ENCODE measurements at regions of chr10 and their contacts with region 1.

Region 1: GRCh38 chr10:28991326-28992270 is 297.3 kb upstream of the LYZL1 start:
- DNase-seq: peak; percentile 78
- ATAC-seq: peak; percentile 93
- H3K4me3 ChIP-seq: no peak overlapping the region
- H3K27ac ChIP-seq: no peak overlapping the region; the same call in 1 of the 2 replicates
- H3K4me1 ChIP-seq: peaks cover 4% of the 10 kb centered on the region
- H3K27me3 ChIP-seq: no peaks in the 10 kb centered on the region
- CTCF ChIP-seq: peak; percentile 70
- POLR2A ChIP-seq: no peak
- RAD21 ChIP-seq: peak; percentile 85

Region 2: GRCh38 chr10:28217848-28218247 is 773.8 kb before region 1 on chr10:
- CTCF ChIA-PET with region 1: no interaction called
- POLR2A ChIA-PET with region 1: no interaction called
- dilution Hi-C with region 1: no loop called
- in situ Hi-C with region 1: no loop called
- intact Hi-C with region 1: no loop called
- DNase-seq: peak; percentile 92
- ATAC-seq: peak; percentile 91
- H3K4me3 ChIP-seq: peak overlapping the region; percentile 3; the same call in 1 of the 2 replicates
- H3K27ac ChIP-seq: peak overlapping the region; percentile 48
- H3K4me1 ChIP-seq: peaks cover 3% of the 10 kb centered on the region
- H3K27me3 ChIP-seq: no peaks in the 10 kb centered on the region
- CTCF ChIP-seq: no peak
- POLR2A ChIP-seq: no peak
- RAD21 ChIP-seq: no peak

Region 3: GRCh38 chr10:28663576-28664313 is 327.9 kb before region 1 on chr10:
- CTCF ChIA-PET with region 1: interaction called, 13 read pairs
- POLR2A ChIA-PET with region 1: no interaction called
- dilution Hi-C with region 1: no loop called
- in situ Hi-C with region 1: no loop called
- intact Hi-C with region 1: loop called (anchors 1 kb)
- DNase-seq: peak; percentile 87
- ATAC-seq: peak; percentile 84
- H3K4me3 ChIP-seq: no peak overlapping the region
- H3K27ac ChIP-seq: no peak overlapping the region
- H3K4me1 ChIP-seq: peaks cover 6% of the 10 kb centered on the region
- H3K27me3 ChIP-seq: peaks cover 25% of the 10 kb centered on the region
- CTCF ChIP-seq: peak; percentile 99
- POLR2A ChIP-seq: peak; percentile 54; the same call in 1 of the 2 replicates
- RAD21 ChIP-seq: peak; percentile 100

Region 4: GRCh38 chr10:28734941-28735759 is 256.4 kb before region 1 on chr10:
- CTCF ChIA-PET with region 1: no interaction called
- POLR2A ChIA-PET with region 1: no interaction called
- dilution Hi-C with region 1: no loop called
- in situ Hi-C with region 1: no loop called
- intact Hi-C with region 1: loop called (anchors 2 kb)
- DNase-seq: peak; percentile 96
- ATAC-seq: peak; percentile 96
- H3K4me3 ChIP-seq: no peak overlapping the region
- H3K27ac ChIP-seq: peak overlapping the region; percentile 40
- H3K4me1 ChIP-seq: peaks cover 5% of the 10 kb centered on the region
- H3K27me3 ChIP-seq: peaks cover 16% of the 10 kb centered on the region
- CTCF ChIP-seq: no peak
- POLR2A ChIP-seq: no peak
- RAD21 ChIP-seq: no peak

Region 5: DNA sequence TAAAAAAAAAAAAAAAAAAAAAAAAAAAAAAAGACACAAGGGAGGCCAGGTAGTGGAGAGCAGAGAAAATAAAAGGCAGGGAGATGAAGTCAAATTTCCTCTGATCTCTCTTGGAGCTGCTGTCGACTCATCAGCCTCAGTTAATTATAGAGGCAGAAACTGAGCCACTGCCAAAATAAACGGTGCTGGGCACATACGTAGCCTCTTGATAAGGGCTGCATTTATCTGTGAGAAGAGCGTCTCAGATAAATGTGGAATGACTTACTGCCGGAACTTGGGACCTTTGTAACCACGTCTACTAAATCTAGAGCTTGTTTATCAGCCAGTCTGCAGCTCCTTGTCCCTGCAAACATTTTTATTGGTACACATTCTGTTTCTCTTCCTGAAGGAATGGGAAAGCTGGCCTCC is 152.0 kb before region 1 on chr10:
- CTCF ChIA-PET with region 1: interaction called, 3 read pairs
- POLR2A ChIA-PET with region 1: no interaction called
- dilution Hi-C with region 1: no loop called
- in situ Hi-C with region 1: no loop called
- intact Hi-C with region 1: loop called (anchors 5 kb)
- DNase-seq: peak; percentile 79
- ATAC-seq: peak; percentile 8; the same call in 1 of the 2 replicates
- H3K4me3 ChIP-seq: no peak overlapping the region
- H3K27ac ChIP-seq: no peak overlapping the region
- H3K4me1 ChIP-seq: peaks cover 12% of the 10 kb centered on the region
- H3K27me3 ChIP-seq: no peaks in the 10 kb centered on the region
- CTCF ChIP-seq: no peak
- POLR2A ChIP-seq: no peak
- RAD21 ChIP-seq: no peak

Region 6: DNA sequence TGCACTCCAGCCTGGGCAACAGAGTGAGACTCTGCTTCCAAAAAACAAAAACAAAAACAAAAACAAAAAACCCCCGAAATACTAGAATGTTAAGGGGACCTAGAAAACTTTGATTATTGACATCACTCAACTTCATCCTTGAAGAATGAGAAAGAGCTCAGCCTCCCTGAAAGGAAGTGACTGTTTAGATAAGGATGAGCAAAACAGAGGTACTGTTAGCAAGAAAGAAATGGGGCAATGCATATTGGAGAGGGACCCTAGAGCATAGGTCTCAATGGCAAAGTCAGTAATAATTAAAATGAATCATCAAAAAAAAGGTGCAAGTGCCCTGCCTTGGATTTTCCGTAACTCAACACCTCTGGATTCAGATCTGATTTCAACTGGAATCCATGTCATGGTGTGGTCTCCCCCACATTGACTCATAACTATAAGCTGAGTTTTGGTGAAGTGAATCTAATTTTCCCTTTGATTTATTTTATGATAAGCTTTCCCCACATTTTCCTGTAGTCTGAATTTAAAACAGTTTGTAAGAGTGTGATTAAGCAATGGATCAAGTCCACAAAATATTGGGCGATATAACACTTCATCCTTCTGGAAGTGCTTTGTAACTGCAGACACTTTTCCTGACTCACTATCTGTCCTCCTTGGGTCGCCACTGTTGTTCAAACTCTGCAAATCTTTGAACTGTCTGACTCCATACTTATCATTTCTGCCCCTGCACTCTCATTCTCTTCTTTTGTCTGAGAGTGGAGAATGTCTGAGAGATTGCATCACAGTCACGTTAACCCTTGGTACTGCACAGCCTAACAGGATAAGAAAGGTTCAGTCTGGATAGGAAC is 72.4 kb after region 1 on chr10:
- CTCF ChIA-PET with region 1: no interaction called
- POLR2A ChIA-PET with region 1: no interaction called
- dilution Hi-C with region 1: no loop called
- in situ Hi-C with region 1: no loop called
- intact Hi-C with region 1: loop called (anchors 2 kb)
- DNase-seq: peak; percentile 52
- ATAC-seq: peak; percentile 88
- H3K4me3 ChIP-seq: no peak overlapping the region
- H3K27ac ChIP-seq: no peak overlapping the region
- H3K4me1 ChIP-seq: peaks cover 4% of the 10 kb centered on the region; the same call in 1 of the 2 replicates
- H3K27me3 ChIP-seq: peaks cover 7% of the 10 kb centered on the region
- CTCF ChIP-seq: peak; percentile 24; the same call in 1 of the 2 replicates
- POLR2A ChIP-seq: no peak
- RAD21 ChIP-seq: peak; percentile 43

Region 7: GRCh38 chr10:29131952-29132820 is 140.6 kb after region 1 on chr10:
- CTCF ChIA-PET with region 1: interaction called, 7 read pairs
- POLR2A ChIA-PET with region 1: no interaction called
- dilution Hi-C with region 1: no loop called
- in situ Hi-C with region 1: no loop called
- intact Hi-C with region 1: loop called (anchors 5 kb)
- DNase-seq: peak; percentile 19
- ATAC-seq: peak; percentile 49; the same call in 1 of the 2 replicates
- H3K4me3 ChIP-seq: no peak overlapping the region
- H3K27ac ChIP-seq: no peak overlapping the region
- H3K4me1 ChIP-seq: peaks cover 15% of the 10 kb centered on the region
- H3K27me3 ChIP-seq: peaks cover 3% of the 10 kb centered on the region
- CTCF ChIP-seq: no peak
- POLR2A ChIP-seq: no peak
- RAD21 ChIP-seq: no peak

Region 8: GRCh38 chr10:29304264-29305030 is 312.8 kb after region 1 on chr10:
- CTCF ChIA-PET with region 1: no interaction called
- POLR2A ChIA-PET with region 1: no interaction called
- dilution Hi-C with region 1: no loop called
- in situ Hi-C with region 1: loop called (anchors 10 kb)
- intact Hi-C with region 1: loop called (anchors 5 kb)
- DNase-seq: peak; percentile 70
- ATAC-seq: peak; percentile 98
- H3K4me3 ChIP-seq: no peak overlapping the region
- H3K27ac ChIP-seq: no peak overlapping the region
- H3K4me1 ChIP-seq: no peaks in the 10 kb centered on the region
- H3K27me3 ChIP-seq: no peaks in the 10 kb centered on the region; the same call in 1 of the 2 replicates
- CTCF ChIP-seq: peak; percentile 91
- POLR2A ChIP-seq: no peak
- RAD21 ChIP-seq: peak; percentile 93

Measured in IMR-90 (cell line).